ENCODE measurements at regions of chr14 and their contacts with region 1.

Region 1: GRCh38 chr14:68685419-68686204 is 107.3 kb downstream of the ZFP36L1 start:
- DNase-seq: peak; percentile 86
- ATAC-seq: peak; percentile 87
- H3K4me3 Mint-ChIP-seq: peak overlapping the region; percentile 31
- H3K27ac Mint-ChIP-seq: peak overlapping the region; percentile 81
- H3K4me1 Mint-ChIP-seq: peaks cover 57% of the 10 kb centered on the region
- H3K27me3 Mint-ChIP-seq: no peaks in the 10 kb centered on the region

Region 2: DNA sequence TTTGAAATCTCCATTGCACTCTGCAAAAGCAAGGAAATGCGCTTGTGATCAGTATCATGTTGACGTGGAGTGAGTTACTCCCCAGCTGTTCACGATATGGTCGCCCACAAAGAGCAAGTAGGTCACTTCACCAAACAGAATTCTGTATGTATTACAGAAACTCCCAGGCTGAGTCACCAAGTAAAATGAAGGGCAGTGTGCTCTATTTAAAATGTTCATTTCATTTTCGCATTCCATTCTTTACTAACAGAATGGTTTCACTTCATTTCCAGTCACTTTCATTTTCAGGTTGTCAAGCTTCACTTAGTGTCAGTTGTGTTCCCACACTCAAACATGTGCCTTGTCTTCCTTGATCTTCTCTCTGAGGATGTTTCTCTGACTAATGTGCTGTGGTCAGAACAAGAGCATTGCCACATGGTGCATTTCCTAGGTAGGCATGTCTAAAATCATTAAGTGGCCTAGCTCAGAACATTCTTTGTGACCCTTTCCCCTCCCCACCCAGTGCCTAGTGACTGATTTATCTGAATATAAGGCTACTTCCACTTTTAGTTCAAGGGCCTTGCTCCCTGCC is 474.8 kb before region 1 on chr14:
- CTCF ChIA-PET with region 1: no interaction called
- POLR2A ChIA-PET with region 1: no interaction called
- intact Hi-C with region 1: loop called in 1 of 2 experiments (anchors 1 kb)
- DNase-seq: peak; percentile 71
- ATAC-seq: peak; percentile 93
- H3K4me3 Mint-ChIP-seq: peak overlapping the region; percentile 43
- H3K27ac Mint-ChIP-seq: peak overlapping the region; percentile 84
- H3K4me1 Mint-ChIP-seq: peaks cover 53% of the 10 kb centered on the region
- H3K27me3 Mint-ChIP-seq: no peaks in the 10 kb centered on the region

Region 3: GRCh38 chr14:68663385-68664076 is 22.1 kb before region 1 on chr14:
- CTCF ChIA-PET with region 1: interaction called, 4 read pairs
- POLR2A ChIA-PET with region 1: interaction called, 4 read pairs
- intact Hi-C with region 1: loop called (anchors 1 kb)
- DNase-seq: peak; percentile 72
- ATAC-seq: peak; percentile 83
- H3K4me3 Mint-ChIP-seq: peak overlapping the region; percentile 30
- H3K27ac Mint-ChIP-seq: peak overlapping the region; percentile 81
- H3K4me1 Mint-ChIP-seq: peaks cover 53% of the 10 kb centered on the region
- H3K27me3 Mint-ChIP-seq: no peaks in the 10 kb centered on the region

Region 4: GRCh38 chr14:68714991-68715964 is 29.7 kb after region 1 on chr14:
- CTCF ChIA-PET with region 1: interaction called, 3 read pairs
- POLR2A ChIA-PET with region 1: no interaction called
- intact Hi-C with region 1: loop called in 1 of 2 experiments (anchors 1 kb)
- DNase-seq: peak; percentile 48
- ATAC-seq: peak; percentile 62
- H3K4me3 Mint-ChIP-seq: no peak overlapping the region
- H3K27ac Mint-ChIP-seq: peak overlapping the region; percentile 61
- H3K4me1 Mint-ChIP-seq: peaks cover 53% of the 10 kb centered on the region
- H3K27me3 Mint-ChIP-seq: no peaks in the 10 kb centered on the region

Region 5: DNA sequence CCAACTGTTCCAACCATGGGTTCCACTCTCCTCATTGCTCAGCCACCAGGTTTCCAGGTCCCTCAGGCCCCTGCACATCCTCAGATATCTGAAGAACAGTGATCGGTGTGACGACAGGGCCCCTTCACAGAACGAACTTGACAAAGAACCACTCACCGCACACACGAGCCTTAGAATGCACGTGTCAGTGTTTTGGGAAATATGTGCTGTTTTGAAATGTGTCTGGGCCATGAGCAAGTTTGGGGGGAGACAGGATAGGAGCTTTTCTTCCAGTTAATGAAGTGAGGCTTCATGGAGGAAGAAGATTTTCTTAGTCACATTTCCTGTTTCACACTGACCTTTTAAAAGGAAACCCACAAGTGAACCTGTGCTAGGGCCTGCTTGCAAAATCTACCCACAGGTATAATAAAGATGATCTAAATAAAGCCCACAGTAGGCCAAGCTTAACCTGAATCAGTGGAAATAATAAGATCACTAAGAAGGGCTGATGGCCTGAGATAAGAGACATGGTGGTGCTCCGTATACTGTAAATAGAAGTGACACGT is 48.7 kb after region 1 on chr14:
- CTCF ChIA-PET with region 1: no interaction called
- POLR2A ChIA-PET with region 1: no interaction called
- intact Hi-C with region 1: loop called (anchors 1 to 5 kb)
- DNase-seq: peak; percentile 61
- ATAC-seq: peak; percentile 59
- H3K4me3 Mint-ChIP-seq: no peak overlapping the region
- H3K27ac Mint-ChIP-seq: peak overlapping the region; percentile 85
- H3K4me1 Mint-ChIP-seq: peaks cover 47% of the 10 kb centered on the region
- H3K27me3 Mint-ChIP-seq: no peaks in the 10 kb centered on the region

Region 6: DNA sequence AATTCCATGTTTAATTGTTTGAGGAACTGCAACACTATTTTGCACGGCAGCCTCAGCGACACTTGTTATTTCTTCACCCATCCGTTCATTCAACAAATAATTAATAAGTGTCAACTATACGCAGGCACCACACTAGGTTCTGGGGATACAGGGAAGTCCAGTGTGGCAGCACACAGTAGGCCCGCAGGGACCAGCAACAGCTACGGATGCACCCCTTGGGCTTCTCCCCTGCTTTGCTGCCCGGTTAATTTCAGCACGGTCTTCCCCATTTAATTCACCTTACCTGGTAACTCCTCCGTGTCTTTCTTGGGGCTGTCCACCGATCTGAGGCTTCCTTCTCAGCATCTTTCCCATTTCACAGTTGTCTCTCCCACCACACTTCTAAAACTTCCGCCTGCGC is 59.0 kb after region 1 on chr14:
- CTCF ChIA-PET with region 1: no interaction called
- POLR2A ChIA-PET with region 1: no interaction called
- intact Hi-C with region 1: no loop called
- DNase-seq: no peak
- ATAC-seq: no peak
- H3K4me3 Mint-ChIP-seq: no peak overlapping the region
- H3K27ac Mint-ChIP-seq: no peak overlapping the region
- H3K4me1 Mint-ChIP-seq: peaks cover 2% of the 10 kb centered on the region
- H3K27me3 Mint-ChIP-seq: no peaks in the 10 kb centered on the region

Region 7: DNA sequence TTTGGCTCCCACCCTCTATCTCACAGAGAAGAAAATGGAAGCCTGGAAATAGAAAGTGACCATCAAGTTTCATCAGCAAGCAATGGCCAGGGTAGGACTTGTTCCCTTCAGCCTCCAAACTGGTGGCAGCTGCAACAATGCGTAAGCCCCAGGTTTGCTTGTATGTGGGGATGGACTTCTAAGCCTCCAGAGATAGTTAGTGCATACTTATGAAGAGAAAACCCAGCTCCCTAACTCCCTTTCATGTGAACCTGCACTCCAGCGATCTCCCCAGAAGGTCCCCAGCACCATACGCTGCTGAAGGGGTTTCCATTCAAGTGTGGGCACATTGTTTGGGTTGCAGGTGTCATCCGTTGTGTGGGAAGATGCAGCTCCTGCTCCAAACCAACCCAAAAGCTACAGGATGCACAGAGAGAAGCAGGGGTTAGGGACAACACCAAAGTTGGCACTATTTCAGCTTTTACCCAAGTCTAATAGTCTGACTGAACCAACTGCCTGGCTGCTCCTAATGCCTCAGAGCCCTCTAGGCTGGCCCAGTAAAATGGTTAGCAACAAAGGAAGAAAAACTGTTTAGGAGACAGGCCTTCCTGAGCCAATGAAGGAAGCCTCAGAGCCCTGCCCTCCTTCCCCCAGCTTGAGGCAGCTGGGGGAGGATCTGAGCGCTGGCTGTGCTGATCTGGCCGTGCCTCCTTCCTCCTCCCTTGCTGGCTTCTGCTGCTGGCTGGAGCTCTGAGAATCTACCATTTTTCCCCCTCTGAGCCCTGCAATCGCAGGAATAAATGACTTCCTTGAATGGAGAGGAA is 94.9 kb after region 1 on chr14:
- CTCF ChIA-PET with region 1: interaction called, 5 read pairs
- POLR2A ChIA-PET with region 1: interaction called, 6 read pairs
- intact Hi-C with region 1: loop called (anchors 1 kb)
- DNase-seq: peak; percentile 53
- ATAC-seq: peak; percentile 14
- H3K4me3 Mint-ChIP-seq: peak overlapping the region; percentile 61
- H3K27ac Mint-ChIP-seq: peak overlapping the region; percentile 92
- H3K4me1 Mint-ChIP-seq: peaks cover 80% of the 10 kb centered on the region
- H3K27me3 Mint-ChIP-seq: no peaks in the 10 kb centered on the region

Measured in activated CD4-positive, alpha-beta T cell treated with anti-CD3 and anti-CD28 coated beads for 36 hours (primary cell).